Aorta (tissue), 5 donors: ENCODE measurements at regions of chr1 and their contacts with region 1.

Region 1: DNA sequence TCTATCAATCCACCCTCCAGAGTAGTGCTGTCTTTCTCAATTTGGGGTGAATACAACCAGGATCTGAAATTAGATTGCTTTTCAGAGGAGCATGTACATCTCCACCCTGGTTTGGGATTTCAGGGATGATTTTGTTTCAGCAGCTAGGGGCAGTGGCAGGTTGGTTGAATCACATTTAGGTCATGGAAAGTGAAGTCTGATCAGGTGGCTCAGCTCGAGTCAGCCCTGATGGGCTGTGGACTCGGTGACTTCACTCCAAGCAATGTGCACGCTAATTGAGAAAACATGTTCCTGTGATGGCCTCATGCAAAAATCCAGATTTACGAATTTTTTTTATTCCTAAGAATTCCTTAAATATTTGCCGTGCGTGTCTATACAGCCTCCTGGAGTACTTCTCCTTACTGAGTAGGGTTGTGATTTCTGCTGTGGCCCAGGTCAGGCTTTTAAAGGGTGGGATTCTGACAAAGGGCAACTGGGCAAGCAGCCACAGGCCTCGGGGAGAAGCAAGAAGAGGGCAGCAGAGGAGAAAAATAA is 7.5 kb downstream of the NGF start:
- DNase-seq: peak in 1 of 2 donors; percentile 73
- ATAC-seq: no peak
- H3K4me3 ChIP-seq: no peak overlapping the region
- H3K27ac ChIP-seq: peak overlapping the region; percentile 59 to 90
- H3K4me1 ChIP-seq: peaks cover 10 to 13% of the 10 kb centered on the region in 2 donors
- H3K27me3 ChIP-seq: no peaks in the 10 kb centered on the region

Region 2: GRCh38 chr1:115184951-115185331 is 145.6 kb before region 1 on chr1:
- intact Hi-C with region 1: loop called (anchors 5 kb)
- DNase-seq: peak in 1 of 2 donors; percentile 58
- ATAC-seq: peak; percentile 78
- H3K4me3 ChIP-seq: no peak overlapping the region
- H3K27ac ChIP-seq: peak overlapping the region; percentile 66 to 80
- H3K4me1 ChIP-seq: no peaks in the 10 kb centered on the region
- H3K27me3 ChIP-seq: no peaks in the 10 kb centered on the region

Region 3: DNA sequence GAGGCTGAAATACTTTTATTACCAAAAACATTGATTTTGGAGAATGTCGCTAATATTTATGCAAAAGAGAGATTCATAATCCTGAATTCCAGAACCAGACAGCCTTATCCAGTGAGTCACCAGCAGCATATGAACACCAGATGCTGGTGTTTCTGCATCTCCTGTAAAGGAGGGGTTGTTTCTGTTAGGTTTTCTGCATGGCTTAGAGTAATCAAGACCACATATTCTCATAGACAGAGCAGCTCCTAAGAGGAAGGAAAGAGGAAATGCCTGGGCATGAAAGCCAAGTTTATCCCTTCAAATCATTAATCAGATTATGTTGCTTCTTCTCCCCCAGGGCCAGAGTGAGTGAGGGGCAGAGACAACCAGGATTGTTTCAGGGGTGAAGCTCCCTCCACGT is 78.7 kb before region 1 on chr1:
- intact Hi-C with region 1: no loop called
- DNase-seq: no peak
- ATAC-seq: no peak
- H3K4me3 ChIP-seq: no peak overlapping the region
- H3K27ac ChIP-seq: no peak overlapping the region
- H3K4me1 ChIP-seq: peaks cover 0 to 2% of the 10 kb centered on the region in 2 donors
- H3K27me3 ChIP-seq: no peaks in the 10 kb centered on the region

Region 4: DNA sequence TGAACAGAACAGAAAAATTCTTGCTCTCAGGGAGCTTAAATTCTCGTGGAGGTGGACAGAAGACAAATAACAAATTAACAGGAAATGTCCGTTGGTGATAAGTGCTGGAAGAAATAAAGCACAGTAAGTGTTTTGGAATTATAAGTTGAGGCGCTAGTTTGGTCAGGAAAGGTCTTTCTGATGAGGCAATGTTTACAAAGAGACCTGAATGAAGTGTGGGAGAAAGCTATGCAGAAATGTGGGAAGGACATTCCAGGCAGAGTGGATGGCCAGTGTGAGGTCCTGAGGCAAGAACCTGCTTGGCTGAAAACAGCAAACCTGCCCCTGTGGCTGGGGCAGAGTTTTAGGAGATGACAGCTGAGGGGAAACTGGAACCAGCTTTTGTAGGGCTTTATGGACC is 15.8 kb before region 1 on chr1:
- intact Hi-C with region 1: loop called in 1 of 2 experiments (anchors 2 kb)
- DNase-seq: no peak
- ATAC-seq: no peak
- H3K4me3 ChIP-seq: no peak overlapping the region
- H3K27ac ChIP-seq: peak overlapping the region; percentile 72 to 87
- H3K4me1 ChIP-seq: peaks cover 3 to 9% of the 10 kb centered on the region in 2 donors
- H3K27me3 ChIP-seq: no peaks in the 10 kb centered on the region